ENCODE measurements at regions of chr3 and their contacts with region 1.

Region 1: GRCh38 chr3:55571913-55572312 is 84.8 kb upstream of the WNT5A start:
- DNase-seq: peak; percentile 68 to 72
- ATAC-seq: peak; percentile 90 to 99 (median 97)
- H3K4me3 ChIP-seq: no peak overlapping the region
- H3K27ac ChIP-seq: peak overlapping the region in 2 of 10 donors; percentile 9 to 49
- H3K4me1 ChIP-seq: peaks cover 0 to 13% (median 0%) of the 10 kb centered on the region in 9 donors
- H3K27me3 ChIP-seq: peaks cover 0 to 7% (median 0%) of the 10 kb centered on the region in 7 donors
- CTCF ChIP-seq: peak; percentile 26 to 57 (median 48)

Region 2: DNA sequence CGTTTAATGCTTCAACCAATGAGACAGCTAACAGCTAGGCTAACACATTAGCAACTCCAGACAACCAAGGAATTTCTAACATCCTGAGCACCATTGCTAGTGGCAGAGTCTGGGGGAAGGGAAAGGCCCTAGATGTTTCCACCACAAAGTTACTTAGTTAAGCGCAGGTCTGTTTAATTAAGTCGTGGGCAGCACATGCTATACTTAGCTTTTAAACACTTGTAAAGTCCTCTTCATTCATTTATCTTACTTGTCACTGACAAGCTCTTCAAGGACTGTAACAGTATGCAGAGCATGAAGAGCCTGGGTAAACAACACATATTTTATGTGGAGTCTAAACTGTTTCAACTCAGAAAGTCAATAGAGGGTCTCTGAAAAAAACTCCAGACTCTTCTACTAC is 136.3 kb after region 1 on chr3:
- intact Hi-C with region 1: loop called in 1 of 10 experiments (anchors 5 kb)
- DNase-seq: no peak
- ATAC-seq: peak in 3 of 8 donors; percentile 37 to 65 (median 58)
- H3K4me3 ChIP-seq: no peak overlapping the region
- H3K27ac ChIP-seq: no peak overlapping the region
- H3K4me1 ChIP-seq: peaks cover 0 to 14% (median 4%) of the 10 kb centered on the region in 9 donors
- H3K27me3 ChIP-seq: peaks cover 0 to 11% (median 0%) of the 10 kb centered on the region in 7 donors
- CTCF ChIP-seq: no peak

Measured in heart right ventricle (tissue), 16 donors.